ENCODE measurements at regions of chr5 and their contacts with region 1.

Region 1: DNA sequence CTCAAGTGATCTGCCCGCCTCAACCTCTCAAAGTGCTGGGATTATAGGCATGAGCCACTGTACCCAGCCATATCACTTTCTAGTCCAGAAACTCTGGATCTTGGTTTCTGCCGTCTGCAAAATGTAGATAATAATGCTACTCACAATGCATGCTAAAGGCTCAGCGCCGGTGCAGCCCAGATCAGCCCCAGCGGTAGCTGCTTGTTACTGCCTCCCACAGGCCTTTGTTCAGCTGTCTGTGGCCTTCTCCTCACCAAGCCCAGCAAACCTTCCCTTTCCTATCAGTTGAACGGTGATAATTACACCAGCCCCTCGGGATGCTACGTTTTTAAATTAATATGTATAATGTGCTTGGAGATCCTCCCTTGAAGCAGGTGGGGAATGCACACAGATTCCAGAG is 26.2 kb upstream of the MSX2 start:
- DNase-seq: peak; percentile 28
- ATAC-seq: peak; percentile 87
- H3K4me3 Mint-ChIP-seq: no peak overlapping the region
- H3K27ac Mint-ChIP-seq: no peak overlapping the region
- H3K4me1 Mint-ChIP-seq: peaks cover 19% of the 10 kb centered on the region
- H3K27me3 Mint-ChIP-seq: peaks cover 27% of the 10 kb centered on the region
- CTCF ChIP-seq: no peak

Region 2: GRCh38 chr5:174687503-174687902 is 10.7 kb before region 1 on chr5:
- CTCF ChIA-PET with region 1: interaction called, 10 read pairs
- POLR2A ChIA-PET with region 1: no interaction called
- DNase-seq: no peak
- ATAC-seq: no peak
- H3K4me3 Mint-ChIP-seq: peak overlapping the region; percentile 65
- H3K27ac Mint-ChIP-seq: no peak overlapping the region
- H3K4me1 Mint-ChIP-seq: peaks cover 39% of the 10 kb centered on the region
- H3K27me3 Mint-ChIP-seq: peaks cover 50% of the 10 kb centered on the region
- CTCF ChIP-seq: no peak